PC-9 (cell line): ENCODE measurements at regions of chr11 and their contacts with region 1.

Region 1: GRCh38 chr11:69697861-69698260 is 6.0 kb downstream of the FGF19 start:
- DNase-seq: no peak
- H3K4me3 ChIP-seq: no peak overlapping the region
- H3K27ac ChIP-seq: no peak overlapping the region
- H3K4me1 ChIP-seq: peaks cover 45% of the 10 kb centered on the region
- H3K27me3 ChIP-seq: no peaks in the 10 kb centered on the region
- CTCF ChIP-seq: no peak

Region 2: DNA sequence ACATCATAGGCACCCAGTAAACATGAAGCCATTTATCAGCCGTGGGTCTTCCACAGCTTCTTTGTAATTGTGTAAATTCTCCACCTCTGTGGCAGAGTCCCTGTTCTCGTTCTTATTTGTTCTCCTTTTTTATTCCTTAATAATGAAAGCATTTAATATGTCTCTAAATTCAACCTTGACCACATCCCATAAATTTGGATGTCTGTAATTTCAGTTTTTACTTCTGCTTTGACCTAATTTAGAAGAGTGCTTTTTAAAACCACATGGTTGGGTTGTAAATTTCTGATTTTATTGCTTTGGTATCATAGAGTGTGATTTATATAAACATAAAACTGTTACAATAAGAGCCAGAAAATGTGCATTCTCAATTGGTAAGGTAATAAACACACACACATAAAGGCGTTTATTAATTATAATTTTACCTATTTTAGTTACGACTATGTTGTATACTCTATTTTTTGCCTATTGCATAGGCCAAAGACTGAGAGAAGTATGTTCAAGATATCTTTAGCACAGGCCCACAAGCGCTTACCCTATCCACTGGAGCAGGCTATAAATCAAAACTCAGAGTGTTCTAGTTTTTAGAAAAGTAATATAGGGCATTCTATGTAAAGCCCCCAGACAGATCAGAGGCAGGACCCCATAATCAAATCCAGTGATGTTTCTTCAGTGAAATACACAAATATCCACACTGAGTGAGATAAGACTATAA is 114.9 kb before region 1 on chr11:
- CTCF ChIA-PET with region 1: no interaction called
- POLR2A ChIA-PET with region 1: no interaction called
- intact Hi-C with region 1: no loop called
- DNase-seq: no peak
- H3K4me3 ChIP-seq: no peak overlapping the region
- H3K27ac ChIP-seq: no peak overlapping the region
- H3K4me1 ChIP-seq: no peaks in the 10 kb centered on the region
- H3K27me3 ChIP-seq: peaks cover 16% of the 10 kb centered on the region; the same call in 1 of the 2 replicates
- CTCF ChIP-seq: no peak

Region 3: GRCh38 chr11:69642913-69643632 is 54.8 kb before region 1 on chr11:
- CTCF ChIA-PET with region 1: no interaction called
- POLR2A ChIA-PET with region 1: no interaction called
- intact Hi-C with region 1: no loop called
- DNase-seq: peak; percentile 66 to 83
- H3K4me3 ChIP-seq: peak overlapping the region; percentile 99
- H3K27ac ChIP-seq: peak overlapping the region; percentile 85
- H3K4me1 ChIP-seq: peaks cover 22% of the 10 kb centered on the region
- H3K27me3 ChIP-seq: no peaks in the 10 kb centered on the region
- CTCF ChIP-seq: peak; percentile 91

Region 4: GRCh38 chr11:69670158-69670845 is 27.6 kb before region 1 on chr11:
- CTCF ChIA-PET with region 1: no interaction called
- POLR2A ChIA-PET with region 1: interaction called, 31 read pairs
- intact Hi-C with region 1: no loop called
- DNase-seq: peak; percentile 65 to 83
- H3K4me3 ChIP-seq: no peak overlapping the region
- H3K27ac ChIP-seq: no peak overlapping the region
- H3K4me1 ChIP-seq: peaks cover 14% of the 10 kb centered on the region
- H3K27me3 ChIP-seq: no peaks in the 10 kb centered on the region
- CTCF ChIP-seq: peak; percentile 97